Right lobe of liver (tissue), 6 donors: ENCODE measurements at regions of chr17 and their contacts with region 1.

Region 1: DNA sequence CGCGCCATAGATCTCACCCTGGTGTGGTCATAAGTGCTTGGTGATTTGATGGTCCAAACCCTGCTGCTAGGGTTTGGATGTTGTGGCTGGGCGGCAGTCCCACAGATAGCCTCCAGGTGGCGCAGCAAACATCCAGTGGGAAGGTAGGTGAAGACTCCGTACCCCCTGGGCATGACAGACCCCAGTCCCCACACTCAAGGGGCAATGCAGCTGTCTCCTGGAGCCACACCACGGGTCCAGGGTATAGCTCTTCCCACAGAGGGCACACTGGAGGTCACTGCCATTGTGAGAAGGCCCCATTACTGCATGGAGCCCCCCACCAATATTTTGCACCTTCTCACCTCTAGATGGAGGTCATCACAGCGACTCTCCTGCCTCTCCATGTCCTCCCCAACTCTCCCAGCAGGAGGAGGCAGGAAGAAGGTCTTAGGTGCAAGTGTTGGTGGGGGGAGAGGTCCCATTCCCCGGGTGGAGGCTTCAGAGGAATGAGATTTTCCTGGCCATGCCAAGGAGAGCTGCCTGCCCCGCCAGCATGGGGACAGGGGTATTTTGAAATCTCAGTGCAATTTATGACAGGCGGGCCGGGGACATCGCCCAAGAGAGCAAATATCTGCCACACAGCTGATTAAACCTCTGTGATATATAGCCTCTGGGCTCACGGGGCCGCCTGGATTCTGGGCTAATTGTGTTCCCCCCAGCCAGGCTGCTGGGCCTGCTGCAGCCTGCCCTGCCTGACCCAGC is 17.1 kb upstream of the C17orf113 start:
- DNase-seq: peak; percentile 59 to 72 (median 71)
- ATAC-seq: peak; percentile 72 to 84 (median 80)
- H3K4me3 ChIP-seq: no peak overlapping the region
- H3K27ac ChIP-seq: no peak overlapping the region
- H3K4me1 ChIP-seq: peaks cover 0 to 5% (median 0%) of the 10 kb centered on the region in 4 donors
- H3K27me3 ChIP-seq: peaks cover 0 to 6% of the 10 kb centered on the region in 2 donors
- CTCF ChIP-seq: peak; percentile 82 to 94 (median 89)
- POLR2A ChIP-seq: no peak

Region 2: GRCh38 chr17:42101513-42102319 is 34.2 kb after region 1 on chr17:
- intact Hi-C with region 1: loop called in 1 of 2 experiments (anchors 5 kb)
- DNase-seq: peak; percentile 68 to 72 (median 71)
- ATAC-seq: peak; percentile 73 to 89 (median 84)
- H3K4me3 ChIP-seq: no peak overlapping the region
- H3K27ac ChIP-seq: no peak overlapping the region
- H3K4me1 ChIP-seq: peaks cover 0 to 6% (median 0%) of the 10 kb centered on the region in 4 donors
- H3K27me3 ChIP-seq: no peaks in the 10 kb centered on the region
- CTCF ChIP-seq: peak; percentile 75 to 90 (median 80)
- POLR2A ChIP-seq: no peak

Region 3: DNA sequence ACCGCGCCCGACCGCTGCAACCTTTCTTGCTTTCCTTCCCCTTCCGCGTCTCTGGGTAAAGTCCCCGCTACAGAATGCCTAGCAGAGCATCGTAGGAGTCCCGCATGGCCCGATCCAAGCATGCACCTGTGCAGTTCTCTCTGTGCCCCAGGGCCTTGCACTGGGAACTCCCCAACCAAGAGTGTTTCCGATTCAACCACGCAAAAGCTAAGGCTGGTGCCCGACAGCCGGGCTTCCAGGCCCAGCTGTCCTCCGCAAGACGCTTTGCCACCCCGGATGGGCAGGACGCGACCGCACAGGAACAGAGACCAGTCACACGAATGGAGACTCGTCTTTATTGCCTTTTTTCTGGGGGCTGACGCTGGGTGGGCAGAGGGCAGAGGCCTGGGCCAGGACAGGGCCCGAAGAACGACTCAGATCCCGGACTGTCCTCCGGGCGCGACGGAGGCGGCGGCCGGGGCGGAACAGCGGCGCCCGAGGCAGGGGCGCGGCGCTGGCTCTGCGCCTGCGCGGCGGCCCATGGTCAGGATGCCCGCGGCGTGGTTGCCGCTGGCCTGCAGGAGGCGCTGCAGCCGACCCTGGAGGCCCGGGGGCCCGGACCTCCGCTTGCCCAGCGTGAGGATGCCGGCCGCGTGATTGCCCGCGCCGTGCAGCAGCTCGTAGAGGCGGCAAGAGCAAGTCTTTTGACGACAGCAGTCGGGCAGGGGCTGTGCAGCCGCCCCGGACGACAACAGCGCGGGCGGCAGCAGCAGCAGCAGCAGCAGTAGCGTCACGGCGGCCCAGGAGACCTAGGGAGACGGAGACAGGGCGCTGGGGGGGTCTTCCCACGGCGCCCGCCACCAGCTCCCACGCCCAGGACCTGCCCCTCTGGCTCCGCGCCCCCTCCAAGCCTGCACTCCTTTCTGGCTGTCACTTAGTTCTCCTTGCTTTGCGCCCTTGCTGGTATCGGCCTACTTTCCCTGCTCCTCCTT is 116.5 kb after region 1 on chr17:
- intact Hi-C with region 1: no loop called
- DNase-seq: peak; percentile 69 to 81 (median 76)
- ATAC-seq: peak; percentile 78 to 90 (median 80)
- H3K4me3 ChIP-seq: peak overlapping the region; percentile 52 to 57 (median 56)
- H3K27ac ChIP-seq: peak overlapping the region in 1 of 3 donors; percentile 72
- H3K4me1 ChIP-seq: peaks cover 0 to 16% (median 0%) of the 10 kb centered on the region in 4 donors
- H3K27me3 ChIP-seq: peaks cover 0 to 7% of the 10 kb centered on the region in 2 donors
- CTCF ChIP-seq: peak; percentile 80 to 96 (median 88)
- POLR2A ChIP-seq: peak; percentile 53